ENCODE measurements at regions of chr20 and their contacts with region 1.

Region 1: GRCh38 chr20:33915726-33916331 is 77.9 kb upstream of the RALY start:
- DNase-seq: peak; percentile 67
- ATAC-seq: peak; percentile 81
- H3K4me3 Mint-ChIP-seq: no peak overlapping the region
- H3K27ac Mint-ChIP-seq: no peak overlapping the region
- H3K4me1 Mint-ChIP-seq: peaks cover 19% of the 10 kb centered on the region
- H3K27me3 Mint-ChIP-seq: peaks cover 3% of the 10 kb centered on the region

Region 2: DNA sequence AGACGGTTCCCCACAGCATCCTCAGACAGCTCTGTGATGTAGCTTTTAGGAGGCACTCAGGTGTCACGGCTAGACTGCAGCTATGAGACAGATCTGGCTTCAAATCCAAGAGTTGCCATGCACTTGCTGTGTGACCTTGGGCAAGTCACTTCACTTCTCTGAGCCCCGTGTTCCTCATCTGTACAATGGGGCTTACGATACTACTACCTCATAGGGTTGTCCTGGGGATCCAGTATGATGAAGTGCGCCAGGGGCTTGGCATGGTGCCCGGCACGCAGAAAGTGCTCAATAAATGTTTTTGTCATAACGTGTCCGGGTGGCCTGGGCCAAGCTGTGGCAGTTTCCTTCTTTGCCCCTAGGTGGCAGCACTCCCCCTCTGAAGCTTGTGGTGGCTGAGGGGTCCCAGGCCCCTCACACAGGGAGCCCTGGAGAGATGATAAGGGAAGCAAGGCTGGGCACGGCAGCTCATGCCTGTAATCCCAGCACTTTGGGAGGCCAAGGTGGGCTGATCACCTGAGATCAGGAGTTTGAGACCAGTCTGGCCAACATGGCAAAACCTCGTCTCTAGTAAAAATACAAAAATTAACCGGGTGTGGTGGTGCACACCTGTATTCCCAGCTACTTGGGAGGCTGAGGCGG is 123.8 kb before region 1 on chr20:
- CTCF ChIA-PET with region 1: interaction called, 17 read pairs
- DNase-seq: peak; percentile 68
- ATAC-seq: peak; percentile 69
- H3K4me3 Mint-ChIP-seq: no peak overlapping the region
- H3K27ac Mint-ChIP-seq: peak overlapping the region; percentile 29
- H3K4me1 Mint-ChIP-seq: peaks cover 25% of the 10 kb centered on the region
- H3K27me3 Mint-ChIP-seq: no peaks in the 10 kb centered on the region

Region 3: DNA sequence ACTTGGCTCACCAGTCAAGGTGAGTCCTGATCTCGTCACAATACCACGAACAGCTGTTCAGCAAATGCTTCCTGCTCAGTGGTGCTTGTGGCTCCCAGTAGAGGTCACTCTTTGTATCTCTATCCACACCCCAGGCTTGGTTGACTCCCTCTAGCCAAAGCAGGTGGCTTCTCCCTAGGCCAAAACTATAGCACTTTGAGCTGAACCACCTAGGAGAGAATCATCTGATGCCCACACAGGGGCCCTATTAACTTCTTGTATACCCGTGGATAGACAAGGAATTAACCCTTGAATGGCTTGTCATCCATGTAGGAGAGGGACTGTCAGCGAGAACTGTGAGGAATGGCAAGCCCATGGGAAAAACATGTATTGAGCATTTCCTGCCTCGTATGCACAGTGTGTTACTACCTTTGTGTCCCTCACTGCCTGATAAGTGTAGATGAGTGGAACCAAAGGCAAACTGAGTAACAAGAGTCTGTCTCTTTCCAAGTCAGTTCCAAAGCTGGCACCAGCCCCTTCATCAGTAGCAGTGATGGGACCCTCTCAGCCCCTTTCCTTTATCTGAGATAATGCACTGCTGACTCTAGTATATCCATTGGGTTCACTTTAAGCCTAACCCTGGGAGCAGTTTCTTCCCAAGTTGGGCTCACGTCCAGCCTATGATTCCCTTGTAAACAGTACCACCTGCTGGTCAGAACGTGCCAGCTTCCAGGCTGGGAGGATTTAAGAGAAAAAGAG is 153.7 kb after region 1 on chr20:
- CTCF ChIA-PET with region 1: interaction called, 27 read pairs
- DNase-seq: peak; percentile 74
- ATAC-seq: peak; percentile 80
- H3K4me3 Mint-ChIP-seq: no peak overlapping the region
- H3K27ac Mint-ChIP-seq: peak overlapping the region; percentile 24
- H3K4me1 Mint-ChIP-seq: peaks cover 26% of the 10 kb centered on the region
- H3K27me3 Mint-ChIP-seq: no peaks in the 10 kb centered on the region

Region 4: GRCh38 chr20:34129518-34130162 is 213.8 kb after region 1 on chr20:
- CTCF ChIA-PET with region 1: interaction called, 16 read pairs
- DNase-seq: peak; percentile 67
- ATAC-seq: peak; percentile 96
- H3K4me3 Mint-ChIP-seq: no peak overlapping the region
- H3K27ac Mint-ChIP-seq: no peak overlapping the region
- H3K4me1 Mint-ChIP-seq: peaks cover 11% of the 10 kb centered on the region
- H3K27me3 Mint-ChIP-seq: peaks cover 40% of the 10 kb centered on the region